ENCODE measurements at regions of chr19 and their contacts with region 1.

Region 1: GRCh38 chr19:35421362-35421761 is 26.7 kb upstream of the FFAR2 start:
- DNase-seq: no peak
- H3K4me3 ChIP-seq: no peak overlapping the region
- H3K4me3 Mint-ChIP-seq: no peak overlapping the region
- H3K27ac Mint-ChIP-seq: no peak overlapping the region
- H3K4me1 ChIP-seq: peaks cover 15% of the 10 kb centered on the region
- H3K4me1 Mint-ChIP-seq: peaks cover 14% of the 10 kb centered on the region
- H3K27me3 ChIP-seq: no peaks in the 10 kb centered on the region
- H3K27me3 Mint-ChIP-seq: no peaks in the 10 kb centered on the region
- CTCF ChIP-seq: no peak

Region 2: DNA sequence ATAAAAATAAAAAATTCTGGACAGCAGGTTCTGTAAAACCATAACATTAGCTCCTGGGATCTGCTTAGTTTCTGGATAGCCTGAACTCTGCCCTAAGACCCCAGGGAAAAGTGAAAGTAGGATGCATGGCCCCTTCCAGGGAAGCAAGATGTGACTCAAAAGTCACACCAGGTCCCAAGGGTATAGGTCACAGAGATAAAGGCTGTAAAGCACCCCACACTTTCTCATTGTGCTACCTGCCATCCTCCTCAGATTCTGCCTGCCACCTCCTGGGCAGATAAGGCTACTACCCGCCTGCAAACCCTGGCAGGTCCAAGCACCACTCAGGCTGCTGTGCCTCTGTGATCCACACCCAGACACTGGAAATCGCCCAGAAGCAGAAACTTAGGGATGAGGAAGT is 47.3 kb after region 1 on chr19:
- CTCF ChIA-PET with region 1: interaction called, 6 read pairs
- POLR2A ChIA-PET with region 1: no interaction called
- intact Hi-C with region 1: loop called (anchors 1 kb)
- DNase-seq: peak; percentile 74 to 80
- H3K4me3 ChIP-seq: no peak overlapping the region
- H3K4me3 Mint-ChIP-seq: no peak overlapping the region
- H3K27ac Mint-ChIP-seq: no peak overlapping the region
- H3K4me1 ChIP-seq: peaks cover 10% of the 10 kb centered on the region
- H3K4me1 Mint-ChIP-seq: no peaks in the 10 kb centered on the region
- H3K27me3 ChIP-seq: no peaks in the 10 kb centered on the region
- H3K27me3 Mint-ChIP-seq: no peaks in the 10 kb centered on the region
- CTCF ChIP-seq: peak; percentile 79 to 94

Region 3: GRCh38 chr19:35495107-35496064 is 74.0 kb after region 1 on chr19:
- CTCF ChIA-PET with region 1: interaction called, 13 read pairs
- POLR2A ChIA-PET with region 1: no interaction called
- intact Hi-C with region 1: no loop called
- DNase-seq: peak; percentile 72 to 78
- H3K4me3 ChIP-seq: 0 out of 2 replicates have a peak overlapping the region, but pooled peaks have one; percentile 4
- H3K4me3 Mint-ChIP-seq: peak overlapping the region; percentile 39
- H3K27ac Mint-ChIP-seq: peak overlapping the region; percentile 16
- H3K4me1 ChIP-seq: peaks cover 8% of the 10 kb centered on the region
- H3K4me1 Mint-ChIP-seq: no peaks in the 10 kb centered on the region
- H3K27me3 ChIP-seq: no peaks in the 10 kb centered on the region
- H3K27me3 Mint-ChIP-seq: no peaks in the 10 kb centered on the region
- CTCF ChIP-seq: peak; percentile 96 to 98

Measured in Caco-2 (cell line).